B cell (primary cell): ENCODE measurements at regions of chr5 and their contacts with region 1.

Region 1: GRCh38 chr5:88845081-88845697 is 37.8 kb downstream of the MEF2C start:
- DNase-seq: peak; percentile 64
- ATAC-seq: peak; percentile 69
- H3K4me3 ChIP-seq: no peak overlapping the region
- H3K4me3 Mint-ChIP-seq: peak overlapping the region; percentile 76
- H3K27ac ChIP-seq: peak overlapping the region; percentile 12 to 51
- H3K27ac Mint-ChIP-seq: peak overlapping the region; percentile 87
- H3K4me1 ChIP-seq: peaks cover 23 to 43% of the 10 kb centered on the region in 2 donors
- H3K4me1 Mint-ChIP-seq: peaks cover 65% of the 10 kb centered on the region
- H3K27me3 ChIP-seq: no peaks in the 10 kb centered on the region
- H3K27me3 Mint-ChIP-seq: no peaks in the 10 kb centered on the region
- CTCF ChIP-seq: no peak

Region 2: GRCh38 chr5:88813805-88814575 is 31.2 kb before region 1 on chr5:
- CTCF ChIA-PET with region 1: no interaction called
- POLR2A ChIA-PET with region 1: no interaction called
- intact Hi-C with region 1: loop called (anchors 2 kb)
- DNase-seq: no peak
- ATAC-seq: no peak
- H3K4me3 ChIP-seq: no peak overlapping the region
- H3K4me3 Mint-ChIP-seq: peak overlapping the region; percentile 21
- H3K27ac ChIP-seq: peak overlapping the region in 1 of 2 donors; percentile 53
- H3K27ac Mint-ChIP-seq: peak overlapping the region; percentile 56
- H3K4me1 ChIP-seq: peaks cover 48 to 76% of the 10 kb centered on the region in 2 donors
- H3K4me1 Mint-ChIP-seq: peaks cover 80% of the 10 kb centered on the region
- H3K27me3 ChIP-seq: no peaks in the 10 kb centered on the region
- H3K27me3 Mint-ChIP-seq: no peaks in the 10 kb centered on the region
- CTCF ChIP-seq: no peak

Region 3: GRCh38 chr5:88826646-88827585 is 18.3 kb before region 1 on chr5:
- CTCF ChIA-PET with region 1: interaction called, 6 read pairs
- POLR2A ChIA-PET with region 1: interaction called, 4 read pairs
- intact Hi-C with region 1: loop called (anchors 2 kb)
- DNase-seq: peak; percentile 96
- ATAC-seq: peak; percentile 79
- H3K4me3 ChIP-seq: peak overlapping the region; percentile 3 to 61 (median 35)
- H3K4me3 Mint-ChIP-seq: peak overlapping the region; percentile 78
- H3K27ac ChIP-seq: peak overlapping the region; percentile 92 to 94
- H3K27ac Mint-ChIP-seq: peak overlapping the region; percentile 94
- H3K4me1 ChIP-seq: peaks cover 74 to 94% of the 10 kb centered on the region in 2 donors
- H3K4me1 Mint-ChIP-seq: peaks cover 83% of the 10 kb centered on the region
- H3K27me3 ChIP-seq: no peaks in the 10 kb centered on the region
- H3K27me3 Mint-ChIP-seq: no peaks in the 10 kb centered on the region
- CTCF ChIP-seq: no peak

Region 4: GRCh38 chr5:88833371-88834130 is 11.6 kb before region 1 on chr5:
- CTCF ChIA-PET with region 1: interaction called, 6 read pairs
- POLR2A ChIA-PET with region 1: interaction called, 3 read pairs
- intact Hi-C with region 1: loop called (anchors 1 kb)
- DNase-seq: peak; percentile 65
- ATAC-seq: peak; percentile 66
- H3K4me3 ChIP-seq: peak overlapping the region in 3 of 5 experiments; percentile 1 to 47 (median 16)
- H3K4me3 Mint-ChIP-seq: peak overlapping the region; percentile 87
- H3K27ac ChIP-seq: peak overlapping the region; percentile 58 to 94
- H3K27ac Mint-ChIP-seq: peak overlapping the region; percentile 94
- H3K4me1 ChIP-seq: peaks cover 71 to 86% of the 10 kb centered on the region in 2 donors
- H3K4me1 Mint-ChIP-seq: peaks cover 77% of the 10 kb centered on the region
- H3K27me3 ChIP-seq: no peaks in the 10 kb centered on the region
- H3K27me3 Mint-ChIP-seq: no peaks in the 10 kb centered on the region
- CTCF ChIP-seq: no peak

Region 5: GRCh38 chr5:88862547-88863175 is 17.5 kb after region 1 on chr5:
- CTCF ChIA-PET with region 1: interaction called, 3 read pairs
- POLR2A ChIA-PET with region 1: no interaction called
- intact Hi-C with region 1: loop called (anchors 2 kb)
- DNase-seq: no peak
- ATAC-seq: no peak
- H3K4me3 ChIP-seq: no peak overlapping the region
- H3K4me3 Mint-ChIP-seq: no peak overlapping the region
- H3K27ac ChIP-seq: peak overlapping the region in 1 of 2 donors; percentile 37
- H3K27ac Mint-ChIP-seq: peak overlapping the region; percentile 63
- H3K4me1 ChIP-seq: no peaks in the 10 kb centered on the region
- H3K4me1 Mint-ChIP-seq: peaks cover 39% of the 10 kb centered on the region
- H3K27me3 ChIP-seq: no peaks in the 10 kb centered on the region
- H3K27me3 Mint-ChIP-seq: no peaks in the 10 kb centered on the region
- CTCF ChIP-seq: no peak

Region 6: DNA sequence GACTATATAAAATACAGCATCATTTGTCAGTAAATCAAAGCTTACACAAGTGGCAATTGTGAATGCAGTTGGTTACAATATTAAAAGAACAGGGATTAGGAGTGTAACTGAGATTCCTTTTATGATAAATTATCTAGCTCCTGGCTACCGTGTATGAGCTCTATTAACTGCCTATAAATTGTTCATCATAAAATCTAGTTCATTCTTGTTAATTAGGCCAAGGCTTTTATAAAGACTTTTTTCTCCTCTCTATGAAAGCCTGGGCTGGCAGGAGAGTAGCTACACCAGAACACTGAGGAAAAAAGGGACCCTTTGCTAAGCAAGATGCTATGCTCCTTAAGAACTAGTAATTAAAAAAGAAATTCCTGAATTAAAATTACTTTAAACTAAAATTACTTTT is 170.2 kb after region 1 on chr5:
- CTCF ChIA-PET with region 1: no interaction called
- POLR2A ChIA-PET with region 1: no interaction called
- intact Hi-C with region 1: no loop called
- DNase-seq: no peak
- ATAC-seq: no peak
- H3K4me3 ChIP-seq: no peak overlapping the region
- H3K4me3 Mint-ChIP-seq: no peak overlapping the region
- H3K27ac ChIP-seq: no peak overlapping the region
- H3K27ac Mint-ChIP-seq: no peak overlapping the region
- H3K4me1 ChIP-seq: no peaks in the 10 kb centered on the region
- H3K4me1 Mint-ChIP-seq: no peaks in the 10 kb centered on the region
- H3K27me3 ChIP-seq: no peaks in the 10 kb centered on the region
- H3K27me3 Mint-ChIP-seq: no peaks in the 10 kb centered on the region
- CTCF ChIP-seq: no peak